CD4-positive, alpha-beta memory T cell (primary cell): ENCODE measurements at regions of chr7 and their contacts with region 1.

Region 1: DNA sequence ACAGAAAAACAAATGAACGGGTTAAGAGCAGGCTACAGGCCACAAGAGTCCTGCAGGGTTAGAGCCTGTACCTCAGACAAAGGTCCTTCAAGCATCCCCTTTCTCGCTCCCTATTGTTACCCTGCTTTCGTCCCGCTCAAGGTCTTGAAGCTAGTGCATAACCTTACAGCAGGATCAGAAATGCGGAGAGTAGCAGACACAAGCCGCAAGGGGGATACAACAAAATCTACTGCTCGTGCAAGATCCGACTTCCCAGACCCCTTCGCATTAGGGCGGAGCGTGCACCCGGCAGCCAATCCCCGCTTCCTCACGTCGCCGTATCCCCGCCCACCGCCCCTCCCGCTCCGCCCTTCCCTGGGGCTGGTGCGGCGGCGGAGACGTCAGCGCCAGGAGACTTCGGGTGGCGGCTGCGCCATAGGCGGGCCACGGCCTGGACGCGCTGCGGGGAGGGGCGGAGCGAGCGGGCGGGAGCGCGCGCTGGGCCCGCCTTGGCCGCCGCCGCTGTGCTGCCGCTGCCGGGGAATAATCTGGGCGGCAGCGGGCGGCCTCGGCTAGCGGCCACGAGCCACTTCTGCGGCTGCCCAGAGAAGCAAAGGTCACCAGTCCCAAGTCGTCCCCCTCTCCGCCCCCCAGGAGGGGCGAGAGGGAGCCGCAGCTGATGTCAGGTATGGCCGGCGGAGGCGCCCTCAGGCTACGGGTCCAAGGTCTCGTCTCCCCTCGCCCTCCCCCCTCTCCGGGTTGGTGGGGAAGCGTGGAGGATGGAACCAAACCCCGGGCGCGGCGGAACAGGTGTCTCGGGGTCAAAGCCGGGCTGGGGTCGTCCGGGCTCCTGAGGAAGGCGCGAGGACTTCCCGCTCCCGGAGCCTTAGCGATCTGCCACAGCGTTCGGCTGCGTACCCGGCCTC is at the start of gene C1GALT1:
- DNase-seq: peak; percentile 97 to 99 (median 98)
- H3K4me3 ChIP-seq: peak within 1 kb of the TSS; percentile 55 to 60
- H3K4me3 Mint-ChIP-seq: peak within 1 kb of the TSS; percentile 83 to 99 (median 94)
- H3K27ac ChIP-seq: peak within 1 kb of the TSS; percentile 96
- H3K27ac Mint-ChIP-seq: peak within 1 kb of the TSS; percentile 94 to 98 (median 97)
- H3K4me1 ChIP-seq: peaks cover 50% of the 10 kb centered on the region
- H3K4me1 Mint-ChIP-seq: peaks cover 12 to 21% (median 17%) of the 10 kb centered on the region in 4 donors
- H3K27me3 ChIP-seq: no peaks in the 10 kb centered on the region
- H3K27me3 Mint-ChIP-seq: no peaks in the 10 kb centered on the region
- total RNA-seq, gene C1GALT1: 54.6 to 54.8 TPM

Region 2: DNA sequence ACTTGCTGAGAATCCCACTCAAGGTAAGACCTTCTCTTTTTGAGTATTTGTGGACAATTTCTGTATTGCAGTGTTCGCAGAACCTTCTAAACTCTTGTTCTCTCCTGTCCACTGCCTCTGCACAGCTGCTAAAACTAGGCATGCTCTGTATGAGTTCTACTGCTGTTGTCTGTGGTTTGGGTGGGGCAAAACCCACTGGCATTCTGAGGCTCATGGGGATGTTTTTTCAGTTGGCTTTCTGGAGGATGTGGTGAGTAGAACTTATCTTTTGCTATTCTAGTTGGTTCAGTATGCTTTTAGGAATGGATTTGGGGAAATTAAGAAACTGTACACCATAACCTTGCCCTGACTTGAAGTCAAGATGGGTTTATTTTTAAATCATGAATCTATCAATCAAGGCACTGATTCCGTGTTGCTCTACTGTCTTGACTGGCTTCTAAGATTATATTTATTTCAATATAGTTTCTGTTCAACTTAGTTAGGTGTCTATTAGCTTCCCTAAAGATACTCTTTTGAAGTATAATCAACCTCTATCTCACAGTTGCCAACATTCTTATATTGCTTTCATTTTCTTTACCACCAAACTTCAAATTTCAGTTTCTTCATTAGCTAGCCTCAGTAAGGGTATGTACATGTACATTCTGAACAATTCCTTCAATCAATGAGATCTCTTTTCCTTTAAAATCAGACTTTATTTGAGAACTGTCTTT is 25.1 kb before region 1 on chr7:
- CTCF ChIA-PET with region 1: interaction called, 31 read pairs
- POLR2A ChIA-PET with region 1: interaction called, 128 read pairs
- intact Hi-C with region 1: loop called (anchors 1 kb)
- DNase-seq: peak; percentile 79 to 86 (median 80)
- H3K4me3 ChIP-seq: peak overlapping the region; percentile 12 to 53
- H3K4me3 Mint-ChIP-seq: peak overlapping the region; percentile 69 to 86 (median 81)
- H3K27ac ChIP-seq: peak overlapping the region; percentile 55
- H3K27ac Mint-ChIP-seq: peak overlapping the region; percentile 64 to 95 (median 84)
- H3K4me1 ChIP-seq: peaks cover 63% of the 10 kb centered on the region
- H3K4me1 Mint-ChIP-seq: peaks cover 41 to 70% (median 55%) of the 10 kb centered on the region in 4 donors
- H3K27me3 ChIP-seq: no peaks in the 10 kb centered on the region
- H3K27me3 Mint-ChIP-seq: no peaks in the 10 kb centered on the region

Region 3: DNA sequence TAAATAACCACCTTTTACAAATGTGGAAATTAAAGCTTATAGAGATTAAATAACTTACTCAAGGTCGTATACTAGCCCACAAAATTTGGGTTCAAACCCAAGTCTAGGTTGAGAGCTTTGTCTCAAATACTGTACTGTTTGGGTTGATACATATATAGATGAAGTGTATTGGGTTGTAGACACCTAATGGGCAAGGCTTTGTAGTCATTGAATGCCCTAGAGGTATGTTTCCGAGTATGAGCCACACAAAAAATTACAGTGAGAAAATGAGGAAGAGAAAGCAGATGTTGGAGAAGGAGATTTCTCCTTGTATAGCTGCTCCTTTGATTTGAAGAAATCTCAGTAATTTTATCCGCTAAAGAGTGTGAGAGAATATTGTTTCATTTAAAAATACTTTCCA is 60.5 kb after region 1 on chr7:
- CTCF ChIA-PET with region 1: no interaction called
- POLR2A ChIA-PET with region 1: interaction called, 10 read pairs
- intact Hi-C with region 1: no loop called
- DNase-seq: no peak
- H3K4me3 ChIP-seq: no peak overlapping the region
- H3K4me3 Mint-ChIP-seq: no peak overlapping the region
- H3K27ac ChIP-seq: no peak overlapping the region
- H3K27ac Mint-ChIP-seq: no peak overlapping the region
- H3K4me1 ChIP-seq: peaks cover 7% of the 10 kb centered on the region
- H3K4me1 Mint-ChIP-seq: peaks cover 14 to 40% (median 29%) of the 10 kb centered on the region in 4 donors
- H3K27me3 ChIP-seq: no peaks in the 10 kb centered on the region
- H3K27me3 Mint-ChIP-seq: no peaks in the 10 kb centered on the region

Region 4: DNA sequence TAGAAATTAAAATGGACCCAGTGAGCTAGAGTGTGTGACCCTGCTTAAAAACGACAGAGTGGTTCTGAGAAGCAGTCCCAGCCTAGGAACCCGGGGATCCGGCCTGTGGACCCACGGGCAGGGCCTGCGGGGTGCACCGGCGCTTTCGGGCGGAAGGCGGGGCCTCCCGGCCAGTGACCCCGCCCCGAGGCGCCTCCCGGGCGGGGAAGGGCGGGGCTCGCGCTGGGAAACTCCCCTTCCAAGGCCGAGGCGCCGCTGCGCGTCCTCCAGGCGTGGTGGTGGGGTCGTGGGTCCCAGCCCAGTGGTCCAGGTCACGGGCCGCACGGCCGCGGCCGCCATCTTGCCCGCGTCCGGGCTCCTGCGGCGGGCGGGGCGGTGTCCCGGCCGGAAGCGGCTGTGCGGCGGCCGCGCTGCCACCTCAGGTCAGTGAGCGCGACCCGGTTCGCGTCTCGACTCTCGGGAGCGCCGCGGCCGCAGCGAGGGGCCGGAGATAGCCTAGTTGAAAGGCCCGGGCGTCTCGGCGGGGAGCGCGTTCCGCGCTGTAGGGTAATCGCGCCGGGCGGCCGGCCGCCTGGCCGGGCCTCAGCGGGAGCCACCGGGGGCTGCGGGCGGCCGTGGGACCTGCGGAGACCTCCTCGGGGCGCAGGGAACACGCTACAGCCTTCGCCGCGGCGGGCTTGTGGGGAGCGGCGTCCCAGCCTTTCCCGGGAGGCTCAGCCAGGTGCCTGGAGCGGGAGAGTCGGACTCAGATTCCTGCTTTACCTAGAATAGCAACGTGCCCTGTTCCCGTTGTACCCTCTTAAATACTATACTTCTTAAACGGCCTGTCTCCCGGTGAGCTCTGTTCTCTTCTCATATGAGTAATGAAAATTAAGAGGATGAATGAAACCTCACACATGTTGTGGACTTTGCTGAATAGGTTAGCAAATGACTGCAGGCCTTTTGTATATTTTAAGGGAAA is 384.5 kb after region 1 on chr7 and contains the start of gene MIOS:
- CTCF ChIA-PET with region 1: interaction called, 3 read pairs
- POLR2A ChIA-PET with region 1: interaction called, 10 read pairs
- intact Hi-C with region 1: loop called (anchors 2 kb)
- DNase-seq: peak; percentile 79 to 85 (median 84)
- H3K4me3 ChIP-seq: peak within 1 kb of the TSS; percentile 33 to 61
- H3K4me3 Mint-ChIP-seq: peak within 1 kb of the TSS in 7 of 8 donors; percentile 76 to 90 (median 82)
- H3K27ac ChIP-seq: peak within 1 kb of the TSS; percentile 84
- H3K27ac Mint-ChIP-seq: peak within 1 kb of the TSS; percentile 72 to 95 (median 88)
- H3K4me1 ChIP-seq: peaks cover 47% of the 10 kb centered on the region
- H3K4me1 Mint-ChIP-seq: peaks cover 31 to 38% (median 34%) of the 10 kb centered on the region in 4 donors
- H3K27me3 ChIP-seq: no peaks in the 10 kb centered on the region
- H3K27me3 Mint-ChIP-seq: no peaks in the 10 kb centered on the region
- total RNA-seq, gene MIOS: 22.9 to 25.1 TPM

Region 5: GRCh38 chr7:8134089-8134733 is 951.8 kb after region 1 on chr7:
- CTCF ChIA-PET with region 1: no interaction called
- POLR2A ChIA-PET with region 1: interaction called, 6 read pairs
- intact Hi-C with region 1: loop called (anchors 10 kb)
- DNase-seq: peak; percentile 38 to 63 (median 48)
- H3K4me3 ChIP-seq: peak overlapping the region in 1 of 2 donors; percentile 15
- H3K4me3 Mint-ChIP-seq: peak overlapping the region; percentile 17 to 85 (median 59)
- H3K27ac ChIP-seq: peak overlapping the region; percentile 57
- H3K27ac Mint-ChIP-seq: peak overlapping the region; percentile 93 to 100 (median 97)
- H3K4me1 ChIP-seq: peaks cover 74% of the 10 kb centered on the region
- H3K4me1 Mint-ChIP-seq: peaks cover 48 to 88% (median 68%) of the 10 kb centered on the region in 4 donors
- H3K27me3 ChIP-seq: no peaks in the 10 kb centered on the region
- H3K27me3 Mint-ChIP-seq: no peaks in the 10 kb centered on the region